ENCODE measurements at regions of chr4 and their contacts with region 1.

Region 1: GRCh38 chr4:159201168-159201567 is 98.3 kb downstream of the RAPGEF2 start:
- DNase-seq: no peak

Region 2: DNA sequence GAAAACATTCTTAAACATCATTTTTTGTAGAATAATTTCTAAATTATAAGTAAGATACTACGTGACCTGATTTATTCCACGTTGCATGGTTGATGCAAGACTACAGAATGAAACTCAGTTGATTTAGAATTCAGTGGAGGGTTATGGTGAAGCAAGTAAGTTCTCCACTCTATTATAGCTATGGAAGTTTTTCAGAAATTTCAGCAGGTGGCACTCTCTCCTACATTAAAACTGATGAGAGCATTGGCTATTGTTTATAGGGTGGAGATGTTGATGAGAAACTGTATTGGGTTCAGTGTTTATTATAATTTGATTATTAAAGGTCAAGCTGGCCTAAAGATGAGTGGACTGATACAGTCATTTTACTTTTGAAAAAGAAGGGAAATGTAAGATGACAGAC is 344.3 kb before region 1 on chr4:
- intact Hi-C with region 1: loop called (anchors 2 kb)
- DNase-seq: no peak

Region 3: DNA sequence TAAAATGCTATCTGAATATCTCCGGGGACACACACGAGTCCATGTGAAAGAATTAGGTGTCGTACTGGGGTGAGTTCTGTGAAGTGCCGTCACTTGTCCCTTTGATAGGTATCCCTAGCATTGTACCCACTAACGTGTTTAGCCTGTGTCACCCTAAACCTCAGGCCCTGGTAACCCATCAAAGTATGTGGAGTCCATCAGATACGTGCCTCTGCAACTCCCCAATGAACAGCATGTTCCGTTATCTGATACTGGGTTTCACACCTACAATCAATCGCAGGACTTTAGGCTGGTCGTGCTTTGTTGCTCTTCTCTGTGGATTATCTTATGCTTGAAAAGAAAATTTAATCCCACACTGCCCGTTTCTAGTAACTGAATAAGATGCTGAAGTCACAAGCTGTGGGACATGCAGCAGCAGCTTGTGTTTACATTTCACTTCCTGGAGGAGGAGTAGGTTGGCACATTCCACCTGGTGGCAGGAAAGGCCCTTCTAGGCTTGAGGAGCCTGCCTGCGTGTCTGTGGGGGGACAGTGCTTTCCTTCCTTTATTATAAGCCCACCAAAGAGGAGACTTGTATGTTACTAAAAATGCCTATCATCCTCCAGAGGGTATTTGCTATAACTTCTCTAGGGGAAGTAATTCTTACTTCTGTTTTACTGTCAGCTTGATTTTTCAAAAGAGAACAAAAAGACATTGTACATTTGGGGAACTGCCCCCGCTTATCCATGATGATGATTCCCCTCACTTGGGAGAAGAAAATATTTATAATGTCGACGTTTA is 305.2 kb before region 1 on chr4:
- intact Hi-C with region 1: no loop called
- DNase-seq: no peak

Region 4: DNA sequence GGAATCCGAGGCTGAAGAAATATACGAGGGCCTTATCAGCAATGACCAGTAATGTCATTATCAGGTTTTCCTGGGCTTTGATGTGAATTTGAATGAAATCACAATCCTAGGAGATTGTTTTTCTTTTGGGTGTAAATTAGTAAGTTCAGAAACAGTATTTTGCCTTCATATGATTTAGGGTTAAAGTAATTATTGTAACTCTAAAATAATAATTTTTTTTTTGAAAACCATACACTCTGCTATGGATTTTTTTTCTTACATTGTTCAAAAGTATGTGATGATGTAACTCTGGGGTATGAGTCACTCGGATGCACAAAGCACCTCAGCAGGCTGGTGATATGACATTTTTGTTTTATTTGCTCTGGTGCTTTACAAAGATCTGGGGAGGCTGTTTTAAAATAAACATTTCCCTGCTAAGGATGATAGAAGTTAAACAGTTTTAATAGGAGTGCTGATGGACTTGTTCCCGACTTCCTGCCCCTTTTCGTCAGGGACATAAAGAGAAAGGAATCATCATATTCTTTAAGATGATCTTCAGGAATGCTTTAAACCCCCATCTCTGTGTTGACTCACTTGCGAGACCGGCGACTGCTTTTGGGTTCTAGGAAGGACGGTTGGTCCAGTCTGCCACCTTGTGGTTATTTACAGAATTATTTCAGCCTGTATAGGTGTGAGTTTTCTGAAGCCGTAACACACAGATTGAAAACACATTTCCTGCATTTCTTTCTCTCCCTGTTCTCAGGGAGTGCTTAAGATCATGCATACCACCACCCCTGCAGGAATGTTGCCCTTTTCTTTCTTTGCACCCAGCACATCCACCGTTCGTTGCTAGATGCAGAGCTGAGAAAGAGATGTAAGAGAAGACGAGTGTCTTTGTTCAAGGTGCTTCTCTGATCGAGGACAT is 25.8 kb before region 1 on chr4:
- intact Hi-C with region 1: loop called (anchors 2 kb)
- DNase-seq: no peak

Region 5: GRCh38 chr4:159481911-159482310 is 280.7 kb after region 1 on chr4:
- intact Hi-C with region 1: no loop called
- DNase-seq: no peak

Measured in cardiac septum (tissue), 1 donor.